CD14-positive monocyte (primary cell): ENCODE measurements at regions of chr9 and their contacts with region 1.

Region 1: GRCh38 chr9:76605321-76605900 is 146.4 kb downstream of the GCNT1 start:
- DNase-seq: peak in 2 of 3 donors; percentile 44 to 47
- H3K4me3 ChIP-seq: no peak overlapping the region
- H3K4me3 Mint-ChIP-seq: no peak overlapping the region
- H3K27ac ChIP-seq: peak overlapping the region in 1 of 2 donors; percentile 10
- H3K27ac Mint-ChIP-seq: peak overlapping the region in 5 of 7 donors; percentile 9 to 86 (median 58)
- H3K4me1 ChIP-seq: peaks cover 57 to 68% of the 10 kb centered on the region in 2 donors
- H3K4me1 Mint-ChIP-seq: peaks cover 55% of the 10 kb centered on the region
- H3K27me3 ChIP-seq: no peaks in the 10 kb centered on the region
- H3K27me3 Mint-ChIP-seq: no peaks in the 10 kb centered on the region
- CTCF ChIP-seq: no peak

Region 2: GRCh38 chr9:76419782-76420380 is 185.5 kb before region 1 on chr9:
- intact Hi-C with region 1: no loop called
- DNase-seq: peak in 2 of 3 donors; percentile 22 to 31
- H3K4me3 ChIP-seq: no peak overlapping the region
- H3K4me3 Mint-ChIP-seq: no peak overlapping the region
- H3K27ac ChIP-seq: no peak overlapping the region
- H3K27ac Mint-ChIP-seq: no peak overlapping the region
- H3K4me1 ChIP-seq: no peaks in the 10 kb centered on the region
- H3K4me1 Mint-ChIP-seq: peaks cover 8% of the 10 kb centered on the region
- H3K27me3 ChIP-seq: no peaks in the 10 kb centered on the region
- H3K27me3 Mint-ChIP-seq: peaks cover 0 to 3% (median 0%) of the 10 kb centered on the region in 3 donors
- CTCF ChIP-seq: peak; percentile 74

Region 3: GRCh38 chr9:76571288-76571687 is 34.1 kb before region 1 on chr9:
- intact Hi-C with region 1: loop called in 1 of 2 experiments (anchors 5 kb)
- DNase-seq: peak; percentile 65 to 86 (median 85)
- H3K4me3 ChIP-seq: peak overlapping the region; percentile 45 to 91 (median 72)
- H3K4me3 Mint-ChIP-seq: peak overlapping the region; percentile 71 to 89
- H3K27ac ChIP-seq: peak overlapping the region; percentile 26 to 89
- H3K27ac Mint-ChIP-seq: peak overlapping the region; percentile 83 to 93 (median 88)
- H3K4me1 ChIP-seq: peaks cover 44 to 64% of the 10 kb centered on the region in 2 donors
- H3K4me1 Mint-ChIP-seq: peaks cover 57% of the 10 kb centered on the region
- H3K27me3 ChIP-seq: no peaks in the 10 kb centered on the region
- H3K27me3 Mint-ChIP-seq: no peaks in the 10 kb centered on the region
- CTCF ChIP-seq: no peak

Region 4: GRCh38 chr9:76643399-76644117 is 38.1 kb after region 1 on chr9:
- intact Hi-C with region 1: loop called in 1 of 2 experiments (anchors 5 kb)
- DNase-seq: peak; percentile 37 to 53 (median 39)
- H3K4me3 ChIP-seq: peak overlapping the region in 2 of 3 experiments; percentile 9 to 36
- H3K4me3 Mint-ChIP-seq: peak overlapping the region; percentile 58 to 81
- H3K27ac ChIP-seq: peak overlapping the region; percentile 71 to 82
- H3K27ac Mint-ChIP-seq: peak overlapping the region; percentile 57 to 95 (median 88)
- H3K4me1 ChIP-seq: peaks cover 24 to 30% of the 10 kb centered on the region in 2 donors
- H3K4me1 Mint-ChIP-seq: peaks cover 34% of the 10 kb centered on the region
- H3K27me3 ChIP-seq: no peaks in the 10 kb centered on the region
- H3K27me3 Mint-ChIP-seq: no peaks in the 10 kb centered on the region
- CTCF ChIP-seq: no peak

Region 5: DNA sequence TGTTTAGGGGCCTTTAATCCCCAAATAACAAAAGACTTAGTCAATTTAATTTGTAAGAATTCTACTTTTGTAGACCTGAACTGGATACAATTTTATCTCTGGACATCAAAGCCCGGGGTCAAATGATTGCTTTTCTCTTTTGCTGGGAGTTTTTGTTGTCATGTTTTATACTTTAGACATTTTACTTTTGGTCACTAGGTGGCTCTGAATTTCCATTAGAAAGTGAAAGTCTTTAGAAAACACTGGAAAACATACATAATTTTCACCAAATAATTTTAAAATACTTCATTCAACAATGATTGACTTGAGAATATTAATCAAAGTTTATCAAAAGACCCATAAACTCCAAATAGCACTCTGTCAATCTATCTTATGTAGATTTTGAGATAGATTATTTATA is 156.0 kb after region 1 on chr9:
- intact Hi-C with region 1: no loop called
- DNase-seq: no peak
- H3K4me3 ChIP-seq: no peak overlapping the region
- H3K4me3 Mint-ChIP-seq: no peak overlapping the region
- H3K27ac ChIP-seq: no peak overlapping the region
- H3K27ac Mint-ChIP-seq: no peak overlapping the region
- H3K4me1 ChIP-seq: peaks cover 0 to 5% of the 10 kb centered on the region in 2 donors
- H3K4me1 Mint-ChIP-seq: peaks cover 9% of the 10 kb centered on the region
- H3K27me3 ChIP-seq: no peaks in the 10 kb centered on the region
- H3K27me3 Mint-ChIP-seq: peaks cover 1 to 7% (median 2%) of the 10 kb centered on the region in 3 donors
- CTCF ChIP-seq: peak; percentile 20